ENCODE measurements at regions of chrX and their contacts with region 1.

Region 1: DNA sequence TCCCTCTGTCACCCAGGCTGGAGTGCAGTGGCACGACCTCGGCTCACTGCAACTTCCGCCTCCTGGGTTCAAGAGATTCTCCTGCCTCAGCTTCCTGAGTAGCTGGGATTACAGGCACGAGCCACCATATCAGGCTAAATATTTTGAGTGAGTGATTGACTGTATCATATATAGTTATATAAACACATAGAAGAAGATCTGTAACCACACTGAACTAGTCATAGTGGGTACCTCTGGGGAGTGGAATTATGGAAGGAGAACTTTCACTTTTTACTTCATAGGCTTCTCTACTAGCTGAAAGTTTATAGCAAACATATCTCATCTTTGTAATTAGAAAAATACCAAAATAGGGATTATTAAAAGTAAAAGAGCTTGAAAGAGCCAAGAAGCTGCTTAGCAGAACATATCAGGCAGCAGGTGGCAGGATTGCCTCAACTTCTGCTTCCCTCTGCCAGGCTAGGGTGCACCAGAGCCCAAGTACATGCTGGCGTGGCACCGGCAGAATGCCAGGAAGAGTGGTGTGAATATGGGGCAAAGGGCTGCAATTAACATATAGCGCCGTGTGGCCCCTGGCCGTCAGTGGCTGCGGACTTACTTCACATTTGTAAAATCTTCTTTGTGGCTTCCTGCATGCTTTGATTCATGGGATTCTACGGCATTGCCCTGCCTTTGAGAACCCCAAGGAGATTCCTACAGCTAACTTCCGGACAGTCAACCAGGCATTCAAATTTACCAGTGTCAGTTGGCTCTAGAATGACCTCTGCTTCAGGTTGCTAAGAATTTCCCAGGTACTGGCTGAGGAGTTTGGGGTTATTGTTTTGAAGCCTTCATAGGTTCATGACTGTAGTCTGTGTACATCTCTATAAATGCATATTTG is 39.4 kb upstream of the CD40LG start:
- DNase-seq: peak; percentile 18 to 72 (median 56)
- ATAC-seq: peak; percentile 85
- H3K4me3 ChIP-seq: peak overlapping the region; percentile 40
- H3K4me3 Mint-ChIP-seq: peak overlapping the region; percentile 31 to 81 (median 73)
- H3K27ac ChIP-seq: peak overlapping the region; percentile 58
- H3K27ac Mint-ChIP-seq: peak overlapping the region; percentile 62 to 91 (median 85)
- H3K4me1 ChIP-seq: peaks cover 16 to 21% of the 10 kb centered on the region in 2 donors
- H3K4me1 Mint-ChIP-seq: peaks cover 7 to 52% (median 46%) of the 10 kb centered on the region in 7 donors
- H3K27me3 ChIP-seq: no peaks in the 10 kb centered on the region
- H3K27me3 Mint-ChIP-seq: no peaks in the 10 kb centered on the region

Region 2: GRCh38 chrX:136369377-136369776 is 239.2 kb before region 1 on chrX:
- CTCF ChIA-PET with region 1: no interaction called
- POLR2A ChIA-PET with region 1: no interaction called
- intact Hi-C with region 1: no loop called
- DNase-seq: no peak
- ATAC-seq: no peak
- H3K4me3 ChIP-seq: no peak overlapping the region
- H3K4me3 Mint-ChIP-seq: no peak overlapping the region
- H3K27ac ChIP-seq: no peak overlapping the region
- H3K27ac Mint-ChIP-seq: no peak overlapping the region
- H3K4me1 ChIP-seq: no peaks in the 10 kb centered on the region
- H3K4me1 Mint-ChIP-seq: no peaks in the 10 kb centered on the region
- H3K27me3 ChIP-seq: no peaks in the 10 kb centered on the region
- H3K27me3 Mint-ChIP-seq: peaks cover 0 to 10% (median 5%) of the 10 kb centered on the region in 5 donors

Region 3: DNA sequence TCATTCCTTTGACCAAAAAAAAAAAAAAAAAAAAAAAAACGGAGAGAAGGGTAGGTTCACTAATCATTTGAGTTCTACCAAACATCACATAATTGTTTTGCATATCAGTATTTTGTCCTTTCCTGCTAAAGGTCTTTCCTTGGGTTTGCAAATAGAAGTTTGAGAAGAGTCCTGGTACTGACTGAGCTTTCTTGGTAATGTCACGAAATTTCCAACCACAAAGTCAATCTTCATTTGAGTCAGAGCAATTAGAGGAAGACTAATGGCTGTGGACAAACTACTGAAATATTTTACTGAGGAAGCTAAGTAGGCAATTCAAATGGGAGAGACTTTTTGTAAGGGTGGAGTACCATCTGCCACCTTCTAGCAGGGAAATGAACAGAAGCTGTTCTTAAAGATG is 17.7 kb after region 1 on chrX:
- CTCF ChIA-PET with region 1: interaction called, 14 read pairs
- POLR2A ChIA-PET with region 1: interaction called, 13 read pairs
- intact Hi-C with region 1: no loop called
- DNase-seq: no peak
- ATAC-seq: no peak
- H3K4me3 ChIP-seq: peak overlapping the region; percentile 18
- H3K4me3 Mint-ChIP-seq: peak overlapping the region in 8 of 10 donors; percentile 17 to 75 (median 58)
- H3K27ac ChIP-seq: peak overlapping the region; percentile 12
- H3K27ac Mint-ChIP-seq: peak overlapping the region; percentile 40 to 93 (median 85)
- H3K4me1 ChIP-seq: peaks cover 56 to 72% of the 10 kb centered on the region in 2 donors
- H3K4me1 Mint-ChIP-seq: peaks cover 30 to 97% (median 87%) of the 10 kb centered on the region in 7 donors
- H3K27me3 ChIP-seq: no peaks in the 10 kb centered on the region
- H3K27me3 Mint-ChIP-seq: no peaks in the 10 kb centered on the region

Region 4: DNA sequence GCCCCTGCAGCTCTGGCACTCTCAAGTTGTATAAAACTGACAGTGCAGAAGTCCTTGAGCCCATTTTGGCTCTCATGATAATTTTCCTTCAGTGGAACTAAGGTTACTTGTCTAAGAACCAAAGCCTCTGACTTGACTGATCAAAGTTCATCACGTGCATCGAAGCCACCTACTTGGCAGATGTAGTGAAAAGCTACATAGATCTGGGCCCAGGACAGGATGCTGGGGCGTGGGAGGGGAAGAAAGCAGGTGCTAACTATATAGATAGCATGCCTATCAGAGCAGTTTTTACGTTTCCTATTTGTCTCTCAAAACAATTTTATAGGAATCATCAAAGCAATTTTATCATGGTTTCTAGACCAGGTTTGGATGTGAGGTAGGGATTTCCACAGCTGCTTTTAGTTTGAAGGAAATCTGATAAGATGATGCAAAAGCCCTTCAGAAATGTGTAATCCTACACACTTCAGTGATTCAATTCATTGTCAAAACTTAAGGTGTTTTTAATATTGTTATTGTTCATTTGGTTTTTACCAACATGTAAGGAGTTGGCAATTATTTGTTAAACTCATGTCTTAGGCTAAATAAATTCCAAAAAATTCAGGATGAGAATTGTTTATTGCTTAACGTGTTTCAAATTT is 38.2 kb after region 1 on chrX:
- CTCF ChIA-PET with region 1: interaction called, 13 read pairs
- POLR2A ChIA-PET with region 1: interaction called, 38 read pairs
- intact Hi-C with region 1: loop called (anchors 1 kb)
- DNase-seq: peak in 7 of 9 donors; percentile 49 to 76 (median 67)
- ATAC-seq: peak; percentile 88
- H3K4me3 ChIP-seq: no peak overlapping the region
- H3K4me3 Mint-ChIP-seq: peak overlapping the region; percentile 69 to 99 (median 96)
- H3K27ac ChIP-seq: peak overlapping the region; percentile 79
- H3K27ac Mint-ChIP-seq: peak overlapping the region; percentile 92 to 99 (median 95)
- H3K4me1 ChIP-seq: peaks cover 14 to 40% of the 10 kb centered on the region in 2 donors
- H3K4me1 Mint-ChIP-seq: peaks cover 23 to 53% (median 47%) of the 10 kb centered on the region in 7 donors
- H3K27me3 ChIP-seq: no peaks in the 10 kb centered on the region
- H3K27me3 Mint-ChIP-seq: no peaks in the 10 kb centered on the region

Region 5: DNA sequence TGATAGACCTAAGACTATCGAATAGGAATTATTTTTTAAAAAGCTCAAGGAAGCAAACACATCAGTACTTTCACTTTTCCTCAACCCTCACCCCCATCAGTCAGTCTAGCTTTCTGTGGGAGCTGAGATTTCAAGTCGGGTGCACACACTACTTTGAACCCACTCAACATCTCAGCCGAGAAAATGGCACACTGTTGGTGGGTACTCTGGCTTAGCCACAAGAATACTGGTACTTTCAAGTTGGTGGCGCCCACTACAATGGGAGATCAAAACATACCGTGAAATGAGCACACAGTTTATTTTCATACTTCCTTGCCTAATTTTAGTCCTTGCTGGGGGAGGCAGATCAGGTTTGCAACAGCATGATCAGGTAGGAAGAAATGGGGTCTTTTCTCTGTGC is 49.6 kb after region 1 on chrX:
- CTCF ChIA-PET with region 1: interaction called, 13 read pairs
- POLR2A ChIA-PET with region 1: interaction called, 38 read pairs
- intact Hi-C with region 1: no loop called
- DNase-seq: peak in 4 of 9 donors; percentile 33 to 48 (median 40)
- ATAC-seq: peak; percentile 49
- H3K4me3 ChIP-seq: peak overlapping the region; percentile 18
- H3K4me3 Mint-ChIP-seq: peak overlapping the region; percentile 61 to 99 (median 94)
- H3K27ac ChIP-seq: peak overlapping the region; percentile 79
- H3K27ac Mint-ChIP-seq: peak overlapping the region; percentile 85 to 99 (median 97)
- H3K4me1 ChIP-seq: peaks cover 23 to 71% of the 10 kb centered on the region in 2 donors
- H3K4me1 Mint-ChIP-seq: peaks cover 25 to 92% (median 87%) of the 10 kb centered on the region in 7 donors
- H3K27me3 ChIP-seq: peaks cover 0 to 3% of the 10 kb centered on the region in 2 donors
- H3K27me3 Mint-ChIP-seq: no peaks in the 10 kb centered on the region

Region 6: DNA sequence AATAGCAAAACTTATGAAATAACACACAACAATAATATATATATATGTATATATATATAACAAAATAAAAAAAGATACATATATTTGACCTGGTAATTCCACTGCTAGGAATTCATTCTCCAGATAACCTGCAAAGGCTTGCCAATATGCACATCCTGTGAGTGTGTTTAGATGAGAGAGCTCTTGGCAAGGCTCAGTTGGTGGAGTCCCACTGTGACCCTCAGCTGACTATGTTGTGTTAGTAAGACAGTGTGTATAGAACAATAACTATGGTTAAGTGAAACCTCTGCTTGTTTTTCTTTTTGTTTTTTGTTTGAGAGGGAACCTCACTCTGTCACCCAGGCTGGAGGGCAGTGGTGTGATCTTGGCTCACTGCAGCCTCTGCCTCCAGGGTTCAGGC is 311.5 kb after region 1 on chrX:
- CTCF ChIA-PET with region 1: interaction called, 6 read pairs
- POLR2A ChIA-PET with region 1: interaction called, 3 read pairs
- intact Hi-C with region 1: loop called (anchors 1 to 10 kb)
- DNase-seq: no peak
- ATAC-seq: no peak
- H3K4me3 ChIP-seq: no peak overlapping the region
- H3K4me3 Mint-ChIP-seq: no peak overlapping the region
- H3K27ac ChIP-seq: no peak overlapping the region
- H3K27ac Mint-ChIP-seq: no peak overlapping the region
- H3K4me1 ChIP-seq: no peaks in the 10 kb centered on the region
- H3K4me1 Mint-ChIP-seq: peaks cover 0 to 2% (median 2%) of the 10 kb centered on the region in 7 donors
- H3K27me3 ChIP-seq: no peaks in the 10 kb centered on the region
- H3K27me3 Mint-ChIP-seq: no peaks in the 10 kb centered on the region